Activated CD4-positive, alpha-beta T cell treated with anti-CD3 and anti-CD28 coated beads for 36 hours (primary cell): ENCODE measurements at regions of chr20 and their contacts with region 1.

Region 1: DNA sequence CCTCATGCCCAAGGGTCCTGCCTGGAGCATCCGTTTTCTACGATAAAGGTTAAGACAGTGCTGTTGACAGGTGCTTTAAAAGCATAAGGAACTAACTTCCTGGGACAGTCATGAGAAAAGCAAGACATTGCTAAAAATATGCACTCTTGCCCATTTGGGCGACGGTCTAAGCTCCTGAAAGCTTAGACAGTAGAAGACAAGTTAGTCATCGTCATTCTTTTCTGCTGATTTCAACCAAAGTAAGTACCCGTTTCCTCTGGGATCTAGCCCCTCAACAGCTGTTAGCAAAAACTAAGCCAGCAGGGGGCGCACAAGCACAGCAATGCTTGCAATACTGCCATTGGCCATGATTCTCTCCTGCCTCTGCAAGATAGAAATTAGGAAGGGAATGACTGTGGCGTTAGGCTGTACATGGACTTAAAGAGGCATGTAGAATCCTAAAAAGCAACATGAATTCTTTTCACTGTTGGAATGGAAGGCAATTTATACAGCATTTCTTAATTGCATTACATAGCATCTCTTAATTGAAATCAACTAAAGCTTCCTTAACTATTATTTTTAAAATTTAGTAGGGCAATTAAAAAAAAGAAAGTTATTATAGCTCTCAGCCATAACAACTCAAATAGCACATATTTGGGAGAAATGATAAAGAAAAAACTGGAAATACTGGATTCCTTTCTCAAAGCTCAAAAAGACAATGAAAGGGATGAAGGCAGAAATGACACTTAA is 147.8 kb upstream of the RALGAPA2 start:
- DNase-seq: peak; percentile 94
- ATAC-seq: peak; percentile 93
- H3K4me3 Mint-ChIP-seq: no peak overlapping the region
- H3K27ac Mint-ChIP-seq: no peak overlapping the region
- H3K4me1 Mint-ChIP-seq: no peaks in the 10 kb centered on the region
- H3K27me3 Mint-ChIP-seq: peaks cover 19% of the 10 kb centered on the region

Region 2: DNA sequence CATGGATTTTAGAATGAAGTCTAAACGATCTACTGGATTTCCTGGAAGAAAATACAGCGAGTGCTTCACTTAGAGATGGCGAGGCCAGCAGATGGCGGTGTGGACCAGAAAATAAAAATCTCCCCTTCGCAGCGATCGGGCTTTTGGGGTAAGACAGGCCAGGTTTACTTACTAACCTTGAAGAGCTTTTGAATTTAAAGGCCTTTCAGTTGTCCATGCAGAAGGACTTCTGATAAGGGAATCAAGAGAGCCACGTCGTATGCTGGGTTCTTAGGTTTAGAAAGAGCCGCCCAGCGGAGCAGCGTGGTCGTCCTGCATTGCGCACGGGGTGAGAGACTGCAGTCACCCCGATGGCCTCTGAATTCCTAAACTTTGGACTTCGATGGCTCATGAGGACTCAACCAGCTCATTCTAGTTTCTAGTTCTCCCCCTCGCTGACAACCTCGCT is 22.6 kb before region 1 on chr20:
- CTCF ChIA-PET with region 1: interaction called, 13 read pairs
- POLR2A ChIA-PET with region 1: no interaction called
- intact Hi-C with region 1: no loop called
- DNase-seq: peak; percentile 74
- ATAC-seq: no peak
- H3K4me3 Mint-ChIP-seq: no peak overlapping the region
- H3K27ac Mint-ChIP-seq: no peak overlapping the region
- H3K4me1 Mint-ChIP-seq: peaks cover 3% of the 10 kb centered on the region
- H3K27me3 Mint-ChIP-seq: peaks cover 8% of the 10 kb centered on the region

Region 3: GRCh38 chr20:20849161-20849560 is 11.1 kb before region 1 on chr20:
- CTCF ChIA-PET with region 1: interaction called, 14 read pairs
- POLR2A ChIA-PET with region 1: no interaction called
- intact Hi-C with region 1: no loop called
- DNase-seq: no peak
- ATAC-seq: no peak
- H3K4me3 Mint-ChIP-seq: no peak overlapping the region
- H3K27ac Mint-ChIP-seq: no peak overlapping the region
- H3K4me1 Mint-ChIP-seq: no peaks in the 10 kb centered on the region
- H3K27me3 Mint-ChIP-seq: peaks cover 5% of the 10 kb centered on the region

Region 4: DNA sequence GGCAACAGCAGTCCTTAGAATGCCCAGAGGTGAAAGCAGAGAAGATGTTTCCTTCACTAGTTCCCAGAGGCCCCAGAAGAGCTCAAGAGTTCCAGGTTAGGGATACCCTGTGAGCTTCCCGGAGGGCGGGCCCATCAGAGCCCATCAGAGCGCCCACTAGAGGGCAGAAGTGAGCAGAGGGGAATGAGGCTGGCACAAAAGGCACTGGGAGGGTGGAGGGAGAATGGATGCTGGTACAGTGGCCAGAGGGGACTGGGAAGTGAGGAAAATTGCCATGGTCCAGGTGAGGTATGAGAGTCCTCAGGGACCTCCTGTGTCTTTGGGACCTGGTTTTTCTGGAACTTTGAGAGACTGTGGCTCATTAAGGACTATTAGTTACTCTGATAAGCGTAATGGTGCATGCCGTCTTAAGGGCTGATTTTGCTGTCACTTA is 188.6 kb after region 1 on chr20:
- CTCF ChIA-PET with region 1: interaction called, 4 read pairs
- POLR2A ChIA-PET with region 1: no interaction called
- intact Hi-C with region 1: loop called in 1 of 2 experiments (anchors 1 kb)
- DNase-seq: peak; percentile 74
- ATAC-seq: no peak
- H3K4me3 Mint-ChIP-seq: no peak overlapping the region
- H3K27ac Mint-ChIP-seq: no peak overlapping the region
- H3K4me1 Mint-ChIP-seq: no peaks in the 10 kb centered on the region
- H3K27me3 Mint-ChIP-seq: peaks cover 29% of the 10 kb centered on the region

Region 5: GRCh38 chr20:21615617-21616080 is 755.4 kb after region 1 on chr20:
- CTCF ChIA-PET with region 1: no interaction called
- POLR2A ChIA-PET with region 1: no interaction called
- intact Hi-C with region 1: loop called in 1 of 2 experiments (anchors 2 kb)
- DNase-seq: peak; percentile 73
- ATAC-seq: peak; percentile 53
- H3K4me3 Mint-ChIP-seq: no peak overlapping the region
- H3K27ac Mint-ChIP-seq: no peak overlapping the region
- H3K4me1 Mint-ChIP-seq: no peaks in the 10 kb centered on the region
- H3K27me3 Mint-ChIP-seq: peaks cover 32% of the 10 kb centered on the region